Naive thymus-derived CD4-positive, alpha-beta T cell (primary cell): ENCODE measurements at regions of chr7 and their contacts with region 1.

Region 1: GRCh38 chr7:158782761-158783401 is 46.4 kb downstream of the ESYT2 start:
- DNase-seq: no peak
- ATAC-seq: peak; percentile 49
- H3K4me3 ChIP-seq: no peak overlapping the region
- H3K4me3 Mint-ChIP-seq: no peak overlapping the region
- H3K27ac ChIP-seq: peak overlapping the region; percentile 34
- H3K27ac Mint-ChIP-seq: no peak overlapping the region
- H3K4me1 ChIP-seq: peaks cover 7 to 41% of the 10 kb centered on the region in 2 donors
- H3K4me1 Mint-ChIP-seq: peaks cover 4 to 14% (median 8%) of the 10 kb centered on the region in 7 donors
- H3K27me3 ChIP-seq: no peaks in the 10 kb centered on the region
- H3K27me3 Mint-ChIP-seq: no peaks in the 10 kb centered on the region

Region 2: DNA sequence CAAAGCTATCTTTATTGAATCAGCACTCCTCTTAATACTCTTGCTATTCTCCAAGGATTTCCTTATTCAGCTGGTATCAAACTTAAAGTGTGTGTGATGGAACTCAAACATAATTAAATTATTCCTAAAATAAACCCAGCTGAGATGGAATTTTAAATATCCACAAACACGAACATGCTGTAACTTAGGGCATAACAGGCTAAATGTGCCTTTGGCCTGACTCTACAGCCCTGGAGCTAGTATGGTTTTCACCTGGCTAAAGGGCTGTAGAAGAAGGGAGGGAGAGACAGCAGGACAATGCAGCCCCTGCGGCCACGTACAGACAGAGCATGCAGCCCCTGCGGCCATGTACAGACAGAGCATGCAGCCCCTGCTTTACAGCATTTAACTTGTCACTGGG is 12.4 kb after region 1 on chr7:
- CTCF ChIA-PET with region 1: interaction called, 3 read pairs
- POLR2A ChIA-PET with region 1: interaction called, 4 read pairs
- intact Hi-C with region 1: loop called in 1 of 2 experiments (anchors 2 kb)
- DNase-seq: no peak
- ATAC-seq: no peak
- H3K4me3 ChIP-seq: no peak overlapping the region
- H3K4me3 Mint-ChIP-seq: no peak overlapping the region
- H3K27ac ChIP-seq: no peak overlapping the region
- H3K27ac Mint-ChIP-seq: peak overlapping the region in 2 of 9 donors; percentile 21 to 63
- H3K4me1 ChIP-seq: peaks cover 0 to 3% of the 10 kb centered on the region in 2 donors
- H3K4me1 Mint-ChIP-seq: peaks cover 18 to 31% (median 19%) of the 10 kb centered on the region in 7 donors
- H3K27me3 ChIP-seq: no peaks in the 10 kb centered on the region
- H3K27me3 Mint-ChIP-seq: no peaks in the 10 kb centered on the region

Region 3: GRCh38 chr7:158802473-158803202 is 19.8 kb after region 1 on chr7:
- CTCF ChIA-PET with region 1: interaction called, 3 read pairs
- POLR2A ChIA-PET with region 1: interaction called, 4 read pairs
- intact Hi-C with region 1: loop called in 1 of 2 experiments (anchors 2 kb)
- DNase-seq: no peak
- ATAC-seq: peak; percentile 28
- H3K4me3 ChIP-seq: no peak overlapping the region
- H3K4me3 Mint-ChIP-seq: peak overlapping the region; percentile 34 to 78 (median 67)
- H3K27ac ChIP-seq: peak overlapping the region; percentile 39
- H3K27ac Mint-ChIP-seq: peak overlapping the region; percentile 67 to 87 (median 81)
- H3K4me1 ChIP-seq: peaks cover 13 to 23% of the 10 kb centered on the region in 2 donors
- H3K4me1 Mint-ChIP-seq: peaks cover 32 to 86% (median 65%) of the 10 kb centered on the region in 7 donors
- H3K27me3 ChIP-seq: no peaks in the 10 kb centered on the region
- H3K27me3 Mint-ChIP-seq: no peaks in the 10 kb centered on the region

Region 4: DNA sequence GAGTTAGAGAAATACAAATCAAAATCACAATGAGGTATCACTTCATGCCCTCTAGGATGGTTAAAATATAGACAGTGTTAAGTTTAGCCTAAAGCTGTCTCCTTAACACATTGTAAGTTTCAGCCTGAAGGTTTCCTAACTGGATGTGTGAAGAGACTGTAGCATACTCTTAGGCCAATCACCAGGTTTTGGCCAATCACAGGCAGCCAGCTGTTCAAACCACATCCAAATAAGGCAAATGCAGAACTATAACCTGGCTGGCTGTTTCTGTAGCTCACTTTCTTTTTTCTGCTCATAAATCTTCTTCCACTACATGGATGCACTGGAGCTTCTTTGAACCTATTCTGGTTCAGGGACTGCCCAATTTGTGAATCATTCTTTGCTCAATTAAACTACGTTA is 26.7 kb after region 1 on chr7:
- CTCF ChIA-PET with region 1: interaction called, 3 read pairs
- POLR2A ChIA-PET with region 1: interaction called, 10 read pairs
- intact Hi-C with region 1: loop called in 1 of 2 experiments (anchors 1 kb)
- DNase-seq: no peak
- ATAC-seq: peak; percentile 45
- H3K4me3 ChIP-seq: no peak overlapping the region
- H3K4me3 Mint-ChIP-seq: peak overlapping the region in 9 of 10 donors; percentile 51 to 87 (median 68)
- H3K27ac ChIP-seq: peak overlapping the region; percentile 8
- H3K27ac Mint-ChIP-seq: peak overlapping the region; percentile 84 to 99 (median 96)
- H3K4me1 ChIP-seq: peaks cover 25 to 49% of the 10 kb centered on the region in 2 donors
- H3K4me1 Mint-ChIP-seq: peaks cover 52 to 99% (median 79%) of the 10 kb centered on the region in 7 donors
- H3K27me3 ChIP-seq: no peaks in the 10 kb centered on the region
- H3K27me3 Mint-ChIP-seq: no peaks in the 10 kb centered on the region

Region 5: GRCh38 chr7:158818325-158819213 is 35.7 kb after region 1 on chr7:
- CTCF ChIA-PET with region 1: interaction called, 5 read pairs
- POLR2A ChIA-PET with region 1: interaction called, 10 read pairs
- intact Hi-C with region 1: loop called in 1 of 2 experiments (anchors 2 kb)
- DNase-seq: peak; percentile 59 to 90 (median 83)
- ATAC-seq: peak; percentile 85
- H3K4me3 ChIP-seq: peak overlapping the region; percentile 59
- H3K4me3 Mint-ChIP-seq: peak overlapping the region; percentile 82 to 94 (median 87)
- H3K27ac ChIP-seq: peak overlapping the region; percentile 94
- H3K27ac Mint-ChIP-seq: peak overlapping the region; percentile 96 to 99 (median 98)
- H3K4me1 ChIP-seq: peaks cover 73 to 87% of the 10 kb centered on the region in 2 donors
- H3K4me1 Mint-ChIP-seq: peaks cover 75 to 97% (median 85%) of the 10 kb centered on the region in 7 donors
- H3K27me3 ChIP-seq: no peaks in the 10 kb centered on the region
- H3K27me3 Mint-ChIP-seq: no peaks in the 10 kb centered on the region

Region 6: DNA sequence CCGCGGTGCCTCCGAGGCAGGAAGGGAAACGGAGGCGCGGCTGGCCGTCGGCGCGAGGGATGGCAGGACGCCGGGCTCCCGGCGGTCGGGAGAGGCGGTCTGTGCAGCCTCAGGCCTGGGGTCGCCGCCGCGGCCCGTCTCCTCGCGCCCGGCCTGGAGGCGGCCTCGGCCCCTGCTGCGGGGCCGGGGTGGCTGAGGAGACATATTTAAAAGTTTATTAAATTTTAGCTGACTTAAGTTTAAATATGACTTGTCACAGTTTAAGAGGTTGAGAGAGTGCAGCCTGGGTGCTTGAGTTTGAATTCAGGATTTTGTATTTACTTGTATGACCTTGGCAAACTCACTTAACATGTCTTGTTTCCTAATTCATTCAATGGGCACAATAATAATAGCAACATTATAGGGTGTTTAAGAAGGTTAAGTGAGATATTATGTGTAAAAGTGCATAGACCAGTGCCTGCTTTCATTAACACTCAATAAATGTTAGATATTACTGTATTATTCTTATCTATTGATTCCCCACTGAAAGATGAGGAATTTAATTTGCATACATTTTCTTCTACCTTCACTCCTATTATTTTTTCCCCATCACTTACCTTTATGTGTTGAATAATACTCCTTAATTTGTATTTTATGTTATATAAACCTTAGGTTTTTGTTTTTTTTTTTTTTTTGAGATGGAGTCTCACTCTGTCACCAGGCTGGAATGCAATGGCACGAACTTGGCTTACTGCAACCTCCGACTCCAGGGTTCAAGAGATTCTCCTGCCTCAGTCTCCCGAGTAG is 74.2 kb after region 1 on chr7:
- CTCF ChIA-PET with region 1: interaction called, 5 read pairs
- POLR2A ChIA-PET with region 1: no interaction called
- intact Hi-C with region 1: loop called in 1 of 2 experiments (anchors 1 kb)
- DNase-seq: peak in 2 of 9 donors; percentile 15 to 17
- ATAC-seq: no peak
- H3K4me3 ChIP-seq: peak overlapping the region; percentile 77
- H3K4me3 Mint-ChIP-seq: peak overlapping the region; percentile 67 to 98 (median 94)
- H3K27ac ChIP-seq: peak overlapping the region; percentile 83
- H3K27ac Mint-ChIP-seq: peak overlapping the region in 8 of 9 donors; percentile 24 to 92 (median 84)
- H3K4me1 ChIP-seq: peaks cover 0 to 22% of the 10 kb centered on the region in 2 donors
- H3K4me1 Mint-ChIP-seq: peaks cover 15 to 46% (median 39%) of the 10 kb centered on the region in 7 donors
- H3K27me3 ChIP-seq: no peaks in the 10 kb centered on the region
- H3K27me3 Mint-ChIP-seq: peaks cover 0 to 4% (median 0%) of the 10 kb centered on the region in 5 donors

Region 7: GRCh38 chr7:158891922-158892321 is 109.0 kb after region 1 on chr7:
- CTCF ChIA-PET with region 1: no interaction called
- POLR2A ChIA-PET with region 1: no interaction called
- intact Hi-C with region 1: no loop called
- DNase-seq: no peak
- ATAC-seq: no peak
- H3K4me3 ChIP-seq: no peak overlapping the region
- H3K4me3 Mint-ChIP-seq: no peak overlapping the region
- H3K27ac ChIP-seq: no peak overlapping the region
- H3K27ac Mint-ChIP-seq: no peak overlapping the region
- H3K4me1 ChIP-seq: no peaks in the 10 kb centered on the region
- H3K4me1 Mint-ChIP-seq: peaks cover 0 to 9% (median 0%) of the 10 kb centered on the region in 7 donors
- H3K27me3 ChIP-seq: no peaks in the 10 kb centered on the region
- H3K27me3 Mint-ChIP-seq: no peaks in the 10 kb centered on the region